Activated naive CD4-positive, alpha-beta T cell treated with anti-CD3 and anti-CD28 coated beads for 36 hours (primary cell): ENCODE measurements at regions of chr19 and their contacts with region 1.

Region 1: GRCh38 chr19:17677002-17677401 is 11.2 kb downstream of the UNC13A start:
- DNase-seq: peak; percentile 29
- H3K4me3 Mint-ChIP-seq: no peak overlapping the region
- H3K27ac Mint-ChIP-seq: no peak overlapping the region
- H3K4me1 Mint-ChIP-seq: peaks cover 2% of the 10 kb centered on the region
- H3K27me3 Mint-ChIP-seq: peaks cover 40% of the 10 kb centered on the region

Region 2: GRCh38 chr19:17648097-17648660 is 28.8 kb before region 1 on chr19:
- CTCF ChIA-PET with region 1: no interaction called
- intact Hi-C with region 1: no loop called
- DNase-seq: no peak
- H3K4me3 Mint-ChIP-seq: no peak overlapping the region
- H3K27ac Mint-ChIP-seq: no peak overlapping the region
- H3K4me1 Mint-ChIP-seq: no peaks in the 10 kb centered on the region
- H3K27me3 Mint-ChIP-seq: peaks cover 8% of the 10 kb centered on the region

Region 3: DNA sequence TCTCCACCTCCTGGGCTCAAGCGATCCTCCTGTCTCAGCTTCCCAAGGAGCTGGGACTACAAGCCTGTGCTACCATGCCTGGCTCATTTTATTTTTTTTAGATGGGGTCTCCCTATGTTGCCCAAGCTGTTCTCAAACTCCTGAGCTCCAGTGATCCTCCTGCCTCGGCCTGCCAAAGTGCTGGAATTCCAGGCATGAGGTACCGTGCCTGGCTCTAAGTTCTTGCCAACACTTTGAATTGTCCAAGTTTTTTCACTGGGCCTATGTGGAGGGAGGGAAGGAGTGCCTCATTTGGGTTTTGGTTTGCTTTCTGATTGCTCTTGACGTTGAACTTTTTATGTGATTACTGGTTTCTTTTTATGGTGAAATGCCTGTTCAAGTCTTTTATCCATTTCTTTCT is 15.6 kb after region 1 on chr19:
- CTCF ChIA-PET with region 1: interaction called, 3 read pairs
- intact Hi-C with region 1: loop called (anchors 2 kb)
- DNase-seq: no peak
- H3K4me3 Mint-ChIP-seq: no peak overlapping the region
- H3K27ac Mint-ChIP-seq: no peak overlapping the region
- H3K4me1 Mint-ChIP-seq: peaks cover 6% of the 10 kb centered on the region
- H3K27me3 Mint-ChIP-seq: peaks cover 30% of the 10 kb centered on the region